ENCODE measurements at regions of chr21 and their contacts with region 1.

Region 1: DNA sequence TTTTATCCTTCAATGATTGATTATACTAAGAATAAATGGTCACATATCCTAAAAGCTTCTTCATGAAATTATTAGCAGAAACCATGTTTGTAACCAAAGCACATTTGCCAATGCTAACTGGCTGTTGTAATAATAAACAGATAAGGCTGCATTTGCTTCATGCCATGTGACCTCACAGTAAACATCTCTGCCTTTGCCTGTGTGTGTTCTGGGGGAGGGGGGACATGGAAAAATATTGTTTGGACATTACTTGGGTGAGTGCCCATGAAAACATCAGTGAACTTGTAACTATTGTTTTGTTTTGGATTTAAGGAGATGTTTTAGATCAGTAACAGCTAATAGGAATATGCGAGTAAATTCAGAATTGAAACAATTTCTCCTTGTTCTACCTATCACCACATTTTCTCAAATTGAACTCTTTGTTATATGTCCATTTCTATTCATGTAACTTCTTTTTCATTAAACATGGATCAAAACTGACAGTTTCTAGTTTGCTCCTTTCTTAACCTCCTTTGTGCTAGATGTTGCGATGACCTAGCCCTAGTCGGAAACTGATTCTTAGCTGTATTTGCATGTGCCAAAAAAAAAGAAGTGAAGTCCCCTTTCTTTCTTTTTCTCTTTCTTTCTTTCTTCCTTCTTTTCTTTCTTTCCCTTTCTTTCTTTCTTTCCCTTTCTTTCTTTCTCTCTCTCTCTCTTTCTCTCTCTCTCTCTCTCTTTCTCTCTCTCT is 45.1 kb downstream of the MAP3K7CL start:
- DNase-seq: peak in 3 of 5 donors; percentile 11 to 85 (median 35)
- H3K4me3 ChIP-seq: no peak overlapping the region
- H3K27ac ChIP-seq: no peak overlapping the region
- H3K4me1 ChIP-seq: peaks cover 0 to 3% (median 0%) of the 10 kb centered on the region in 3 donors
- H3K27me3 ChIP-seq: no peaks in the 10 kb centered on the region
- CTCF ChIP-seq: no peak

Region 2: GRCh38 chr21:28982637-28983036 is 192.9 kb before region 1 on chr21:
- intact Hi-C with region 1: no loop called
- DNase-seq: no peak
- H3K4me3 ChIP-seq: no peak overlapping the region
- H3K27ac ChIP-seq: no peak overlapping the region
- H3K4me1 ChIP-seq: no peaks in the 10 kb centered on the region
- H3K27me3 ChIP-seq: no peaks in the 10 kb centered on the region
- CTCF ChIP-seq: no peak

Region 3: GRCh38 chr21:29299916-29300806 is 124.6 kb after region 1 on chr21:
- intact Hi-C with region 1: loop called (anchors 10 kb)
- DNase-seq: peak in 4 of 5 donors; percentile 25 to 72 (median 60)
- H3K4me3 ChIP-seq: peak overlapping the region; percentile 84 to 93 (median 85)
- H3K27ac ChIP-seq: peak overlapping the region; percentile 68 to 85
- H3K4me1 ChIP-seq: peaks cover 5 to 27% (median 21%) of the 10 kb centered on the region in 3 donors
- H3K27me3 ChIP-seq: no peaks in the 10 kb centered on the region
- CTCF ChIP-seq: no peak

Region 4: GRCh38 chr21:29360799-29361765 is 185.5 kb after region 1 on chr21:
- intact Hi-C with region 1: no loop called
- DNase-seq: peak in 3 of 5 donors; percentile 33 to 71 (median 61)
- H3K4me3 ChIP-seq: no peak overlapping the region
- H3K27ac ChIP-seq: no peak overlapping the region
- H3K4me1 ChIP-seq: peaks cover 0 to 5% (median 2%) of the 10 kb centered on the region in 3 donors
- H3K27me3 ChIP-seq: no peaks in the 10 kb centered on the region
- CTCF ChIP-seq: peak; percentile 43

Region 5: GRCh38 chr21:29372063-29372802 is 196.7 kb after region 1 on chr21:
- intact Hi-C with region 1: no loop called
- DNase-seq: peak in 4 of 5 donors; percentile 45 to 90 (median 66)
- H3K4me3 ChIP-seq: no peak overlapping the region
- H3K27ac ChIP-seq: no peak overlapping the region
- H3K4me1 ChIP-seq: no peaks in the 10 kb centered on the region
- H3K27me3 ChIP-seq: no peaks in the 10 kb centered on the region
- CTCF ChIP-seq: peak; percentile 84